ENCODE measurements at regions of chr12 and their contacts with region 1.

Region 1: GRCh38 chr12:104137913-104138796 is at the start of gene NFYB:
- DNase-seq: peak; percentile 79 to 90
- H3K4me3 ChIP-seq: peak within 1 kb of the TSS; percentile 69 to 94 (median 89)
- H3K27ac ChIP-seq: peak within 1 kb of the TSS; percentile 92
- H3K4me1 ChIP-seq: peaks cover 3 to 9% (median 6%) of the 10 kb centered on the region in 4 experiments; a peak in 6 of 7 replicates
- H3K27me3 ChIP-seq: 0 out of 7 replicates have a peak, but pooled peaks cover 0 to 3% (median 0%) of the 10 kb centered on the region in 4 experiments
- CTCF ChIP-seq: no peak
- EP300 ChIP-seq: peak in 1 of 2 experiments; percentile 100; a peak in 1 of 3 replicates
- POLR2A ChIP-seq: peak; percentile 90 to 92
- RAD21 ChIP-seq: no peak
- total RNA-seq, gene NFYB: 42.2 and 43.5 TPM in 2 replicates

Region 2: GRCh38 chr12:103705927-103706326 is 432.2 kb before region 1 on chr12:
- CTCF ChIA-PET with region 1: no interaction called
- POLR2A ChIA-PET with region 1: no interaction called
- DNase-seq: no peak
- H3K4me3 ChIP-seq: no peak overlapping the region
- H3K27ac ChIP-seq: no peak overlapping the region
- H3K4me1 ChIP-seq: no peaks in the 10 kb centered on the region
- H3K27me3 ChIP-seq: no peaks in the 10 kb centered on the region
- CTCF ChIP-seq: peak in 2 of 3 experiments; percentile 29 to 65; a peak in 2 of 4 replicates
- EP300 ChIP-seq: no peak
- POLR2A ChIP-seq: no peak
- RAD21 ChIP-seq: peak; percentile 17 to 38; a peak in 3 of 4 replicates

Region 3: DNA sequence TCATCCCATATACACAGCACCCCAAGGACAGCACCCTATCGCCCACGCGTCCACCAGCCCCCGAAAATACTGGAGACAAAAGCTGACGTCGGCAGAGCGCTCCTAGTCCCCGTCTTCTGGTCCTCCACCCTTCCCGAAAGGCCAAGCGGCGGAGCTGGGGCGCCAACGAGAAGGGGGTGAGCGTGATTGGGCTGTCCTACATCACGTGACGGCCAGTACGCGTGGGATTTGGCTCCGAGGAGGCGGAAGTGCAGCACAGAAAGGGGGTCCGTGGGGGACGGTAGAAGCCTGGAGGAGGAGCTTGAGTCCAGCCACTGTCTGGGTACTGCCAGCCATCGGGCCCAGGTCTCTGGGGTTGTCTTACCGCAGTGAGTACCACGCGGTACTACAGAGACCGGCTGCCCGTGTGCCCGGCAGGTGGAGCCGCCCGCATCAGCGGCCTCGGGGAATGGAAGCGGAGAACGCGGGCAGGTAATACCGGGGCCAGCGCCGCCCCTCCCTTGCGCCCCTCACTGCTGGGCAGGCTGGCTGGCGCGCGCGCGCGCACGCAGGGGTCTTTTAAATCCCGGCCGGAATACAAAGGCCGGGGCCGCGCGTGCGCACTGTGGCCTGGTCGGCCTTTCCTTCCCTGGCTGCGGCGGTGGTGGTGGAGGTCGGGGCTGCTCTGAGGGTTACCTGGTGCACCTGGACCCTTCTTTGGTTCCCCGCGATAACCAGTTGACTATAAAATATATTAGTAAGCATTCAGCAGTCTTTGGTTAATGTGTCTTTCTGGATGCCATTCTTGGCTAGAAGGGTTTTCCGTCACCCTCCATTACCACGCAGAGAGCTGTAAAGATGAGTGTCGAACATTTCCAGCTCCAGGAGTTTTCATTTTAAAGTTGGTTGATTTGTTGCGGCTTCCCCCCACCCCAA is 172.3 kb before region 1 on chr12 and contains the start of gene TDG:
- CTCF ChIA-PET with region 1: no interaction called
- POLR2A ChIA-PET with region 1: interaction called, 18 read pairs
- DNase-seq: peak; percentile 93 to 96
- H3K4me3 ChIP-seq: peak within 1 kb of the TSS; percentile 80 to 91 (median 88)
- H3K27ac ChIP-seq: peak within 1 kb of the TSS; percentile 94
- H3K4me1 ChIP-seq: peaks cover 0 to 9% (median 2%) of the 10 kb centered on the region in 4 experiments; a peak in 4 of 7 replicates
- H3K27me3 ChIP-seq: no peaks in the 10 kb centered on the region
- CTCF ChIP-seq: no peak
- EP300 ChIP-seq: no peak
- POLR2A ChIP-seq: peak; percentile 94 to 98
- RAD21 ChIP-seq: no peak
- total RNA-seq, gene TDG: 47.8 and 49.0 TPM in 2 replicates

Region 4: GRCh38 chr12:104064031-104064822 is 73.9 kb before region 1 on chr12 and contains the start of gene HCFC2:
- CTCF ChIA-PET with region 1: no interaction called
- POLR2A ChIA-PET with region 1: interaction called, 10 read pairs
- DNase-seq: peak in 1 of 2 experiments; percentile 94
- H3K4me3 ChIP-seq: peak within 1 kb of the TSS; percentile 76 to 97 (median 91)
- H3K27ac ChIP-seq: no peak within 1 kb of the TSS
- H3K4me1 ChIP-seq: peaks cover 0 to 4% (median 3%) of the 10 kb centered on the region in 4 experiments; a peak in 4 of 7 replicates
- H3K27me3 ChIP-seq: peaks cover 0 to 5% (median 0%) of the 10 kb centered on the region in 4 experiments; a peak in 3 of 7 replicates
- CTCF ChIP-seq: no peak
- EP300 ChIP-seq: no peak
- POLR2A ChIP-seq: no peak
- RAD21 ChIP-seq: no peak
- total RNA-seq, gene HCFC2: 1.8 and 2.5 TPM in 2 replicates

Region 5: DNA sequence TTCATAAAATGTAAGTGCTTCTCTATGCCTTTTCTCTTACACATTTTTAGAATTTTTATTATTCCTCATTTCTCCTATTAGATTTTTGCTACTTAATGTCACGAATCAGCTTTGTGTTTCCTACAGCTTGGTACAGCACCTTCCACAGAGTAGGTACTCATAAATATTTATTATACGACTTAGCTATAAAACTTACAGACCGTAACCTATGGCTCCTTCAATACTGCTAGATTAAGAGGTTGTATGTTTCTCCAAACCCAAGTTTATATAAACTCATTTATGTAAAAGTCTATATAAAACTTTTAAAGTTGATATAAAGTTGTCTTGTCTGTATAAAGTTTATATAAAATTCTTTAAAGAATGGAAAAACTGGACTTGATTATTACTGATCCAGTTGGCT is 11.6 kb before region 1 on chr12:
- CTCF ChIA-PET with region 1: interaction called, 3 read pairs
- POLR2A ChIA-PET with region 1: interaction called, 28 read pairs
- DNase-seq: no peak
- H3K4me3 ChIP-seq: no peak overlapping the region
- H3K27ac ChIP-seq: no peak overlapping the region
- H3K4me1 ChIP-seq: peaks cover 0 to 2% (median 0%) of the 10 kb centered on the region in 4 experiments; a peak in 1 of 7 replicates
- H3K27me3 ChIP-seq: no peaks in the 10 kb centered on the region
- CTCF ChIP-seq: no peak
- EP300 ChIP-seq: no peak
- POLR2A ChIP-seq: no peak
- RAD21 ChIP-seq: no peak

Region 6: DNA sequence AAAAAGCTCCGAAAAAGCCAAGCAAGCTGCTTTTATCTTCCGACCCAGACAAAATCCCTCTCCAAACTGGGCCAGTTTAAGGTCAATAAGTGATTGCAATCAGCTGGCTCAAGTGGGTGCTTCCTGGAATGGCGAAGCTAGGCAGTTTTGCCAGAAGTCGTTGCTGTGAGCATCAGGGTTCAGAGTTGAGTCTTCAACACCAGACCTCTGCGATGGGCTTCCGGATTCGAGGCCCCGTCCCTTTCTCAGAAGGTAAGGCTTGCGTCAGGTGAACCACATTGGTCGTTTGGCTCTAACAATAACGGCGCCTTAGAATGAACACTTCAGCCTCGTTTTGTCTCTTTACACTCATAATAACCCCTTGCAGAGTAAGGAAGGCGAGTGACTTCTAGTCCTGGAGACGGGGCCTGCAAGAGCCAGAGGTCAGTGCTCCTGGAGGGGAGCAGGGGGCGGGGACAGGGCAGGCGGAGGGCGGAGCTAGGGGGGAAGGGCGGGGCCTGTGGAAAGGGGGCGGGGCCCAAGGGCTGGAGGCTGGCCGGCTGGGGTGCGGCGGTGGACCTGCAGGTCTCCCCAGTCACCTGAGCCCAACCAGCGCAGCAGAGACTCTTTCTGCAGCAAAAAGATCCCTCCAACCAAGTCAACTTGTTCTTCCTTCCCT is 33.8 kb after region 1 on chr12:
- CTCF ChIA-PET with region 1: no interaction called
- POLR2A ChIA-PET with region 1: interaction called, 10 read pairs
- DNase-seq: peak; percentile 9 to 72
- H3K4me3 ChIP-seq: no peak overlapping the region
- H3K27ac ChIP-seq: no peak overlapping the region
- H3K4me1 ChIP-seq: no peaks in the 10 kb centered on the region
- H3K27me3 ChIP-seq: 0 out of 7 replicates have a peak, but pooled peaks cover 0 to 2% (median 0%) of the 10 kb centered on the region in 4 experiments
- CTCF ChIP-seq: no peak
- EP300 ChIP-seq: no peak
- POLR2A ChIP-seq: no peak
- RAD21 ChIP-seq: no peak

Measured in H1 (cell line).